Sciatic nerve (tissue), 2 donors: ENCODE measurements at regions of chr15 and their contacts with region 1.

Region 1: DNA sequence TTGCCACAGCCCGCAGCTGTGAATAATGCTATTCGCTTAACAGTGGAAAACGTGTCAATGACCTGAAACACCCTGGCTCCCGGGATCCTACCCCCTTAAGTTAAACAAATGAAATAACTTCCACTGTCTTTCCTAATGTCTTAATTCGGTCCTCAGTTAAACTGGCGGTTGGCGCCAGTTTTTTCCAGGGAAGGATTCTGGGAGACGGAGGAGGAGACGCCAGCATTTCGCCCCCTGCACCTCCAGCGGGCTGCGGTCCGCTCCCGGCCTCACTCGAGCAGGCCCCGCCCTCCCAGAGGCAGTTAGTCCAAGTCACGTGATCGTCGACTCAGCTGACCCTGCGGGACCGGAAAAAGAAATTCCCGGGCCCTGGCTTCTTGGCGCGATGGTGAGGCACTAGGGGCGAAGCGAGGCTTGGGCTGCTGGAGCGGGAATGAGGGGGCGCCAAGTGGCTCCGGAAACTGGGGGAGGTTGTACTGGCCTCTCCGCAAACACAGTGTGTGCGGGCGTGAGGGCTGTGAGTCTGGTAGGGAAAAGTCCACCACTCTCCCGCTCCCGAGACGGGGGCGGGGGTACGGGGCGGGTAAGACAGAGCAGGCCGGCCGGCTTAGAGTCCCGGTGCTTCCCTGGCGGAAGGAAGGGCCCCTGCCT is at the start of gene COMMD4:
- DNase-seq: peak; percentile 99
- ATAC-seq: peak; percentile 97
- total RNA-seq, gene COMMD4: 36.8 TPM

Region 2: GRCh38 chr15:73338058-73338457 is 1997.8 kb before region 1 on chr15:
- intact Hi-C with region 1: loop called (anchors 5 kb)
- DNase-seq: no peak
- ATAC-seq: no peak

Region 3: GRCh38 chr15:75861750-75862402 is 526.0 kb after region 1 on chr15:
- intact Hi-C with region 1: no loop called
- DNase-seq: no peak
- ATAC-seq: no peak

Region 4: DNA sequence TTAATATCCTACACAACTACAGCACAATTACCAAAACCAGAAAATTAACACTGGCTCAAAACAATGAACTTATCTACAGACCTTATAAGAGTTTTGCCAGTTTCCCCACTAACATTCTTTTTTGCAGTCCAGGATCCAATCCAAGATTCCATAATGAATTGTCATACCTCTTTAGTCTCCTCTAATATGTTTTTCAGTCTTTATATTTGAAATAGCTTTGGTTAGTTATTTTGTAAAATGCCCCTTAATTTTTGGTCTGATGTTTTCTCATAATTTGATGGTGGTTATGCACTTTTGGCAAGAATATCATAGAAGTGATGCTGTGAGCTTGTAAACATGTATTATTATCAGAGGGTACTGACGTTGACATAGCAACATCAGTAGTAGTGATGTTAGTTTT is 1125.0 kb after region 1 on chr15:
- intact Hi-C with region 1: no loop called
- DNase-seq: no peak
- ATAC-seq: no peak